ENCODE measurements at regions of chr5 and their contacts with region 1.

Region 1: DNA sequence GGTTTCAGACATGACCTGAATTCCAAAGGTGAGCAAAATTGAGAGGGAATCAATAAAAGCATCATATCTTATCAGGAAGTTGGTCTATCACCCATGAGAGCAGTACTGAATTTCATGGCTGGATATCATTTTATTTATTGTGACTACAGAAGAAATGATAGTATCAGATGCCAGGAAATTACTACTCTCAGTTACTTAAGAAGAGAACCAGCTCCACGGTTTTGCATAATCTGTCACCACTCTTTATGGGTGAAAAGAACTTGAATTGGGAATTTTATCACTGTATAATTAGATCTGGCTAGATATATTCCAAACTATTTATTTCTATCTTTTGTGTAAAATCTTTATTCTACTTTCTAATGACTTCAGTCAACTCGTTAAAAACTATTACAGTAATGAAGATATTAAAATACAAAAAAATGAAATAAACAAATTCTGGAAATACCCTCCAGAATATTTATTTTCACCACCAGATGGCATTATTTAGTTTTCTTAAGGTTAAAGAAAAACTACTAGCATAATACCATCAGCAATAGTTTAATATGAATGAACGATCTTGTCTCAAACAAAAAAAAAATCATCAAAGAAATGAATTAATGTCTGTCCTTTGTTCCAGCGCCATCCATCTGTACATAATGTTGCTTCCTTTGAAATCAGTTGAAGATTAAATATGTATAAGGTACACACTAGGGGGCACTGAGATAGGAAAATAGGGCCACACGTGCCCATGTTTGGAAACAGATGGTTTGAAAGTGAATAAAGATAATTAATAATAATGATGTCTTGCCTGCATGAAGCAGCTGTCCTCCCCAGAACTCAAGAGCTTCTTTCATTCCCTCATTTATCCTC is 84.7 kb upstream of the SLCO6A1 start:
- DNase-seq: peak in 3 of 5 donors; percentile 10 to 16 (median 11)
- H3K4me3 ChIP-seq: no peak overlapping the region
- H3K4me3 Mint-ChIP-seq: no peak overlapping the region
- H3K27ac ChIP-seq: no peak overlapping the region
- H3K27ac Mint-ChIP-seq: no peak overlapping the region
- H3K4me1 ChIP-seq: no peaks in the 10 kb centered on the region
- H3K4me1 Mint-ChIP-seq: peaks cover 0 to 2% (median 0%) of the 10 kb centered on the region in 4 donors
- H3K27me3 ChIP-seq: no peaks in the 10 kb centered on the region
- H3K27me3 Mint-ChIP-seq: peaks cover 0 to 2% of the 10 kb centered on the region in 2 donors

Region 2: DNA sequence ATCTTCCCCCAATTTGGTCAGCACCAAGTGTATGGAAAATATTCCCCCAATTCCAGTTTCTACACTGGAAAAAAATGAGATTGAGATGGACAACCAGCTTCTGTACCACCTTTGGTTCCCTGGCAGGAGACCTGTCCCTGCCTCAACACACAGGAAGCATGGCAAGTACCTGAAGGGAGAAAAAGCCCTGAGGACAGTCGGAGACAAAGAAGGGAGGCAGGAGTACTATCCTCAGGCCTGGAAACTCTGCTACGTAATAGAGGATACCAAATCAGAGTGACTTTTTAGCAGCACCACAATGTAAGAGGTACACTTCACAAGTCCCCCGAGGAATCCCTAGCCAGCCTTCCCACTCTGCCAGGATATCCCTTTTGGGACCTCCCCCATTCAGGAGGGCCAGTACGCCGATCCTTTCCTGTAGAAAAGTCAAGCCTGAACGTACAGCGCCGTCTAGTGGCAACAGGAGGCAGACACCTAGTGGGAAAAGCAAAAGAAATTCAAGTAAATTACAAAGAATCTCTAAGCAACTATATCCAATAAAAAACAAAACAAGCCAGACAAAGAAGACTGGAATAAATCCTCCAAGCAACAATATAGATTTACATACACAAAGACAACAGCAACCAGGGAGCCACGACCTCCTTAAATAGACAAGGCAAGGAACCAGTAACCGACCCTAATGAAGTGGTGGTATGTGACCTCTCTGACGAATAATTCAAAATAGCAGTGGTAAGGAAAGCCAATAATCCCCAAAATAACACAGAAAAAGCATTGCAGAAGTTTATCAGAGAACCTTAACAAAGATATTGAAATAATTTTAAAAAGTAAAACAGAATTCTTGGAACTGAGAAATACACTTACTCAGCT is 21.4 kb before region 1 on chr5:
- CTCF ChIA-PET with region 1: no interaction called
- POLR2A ChIA-PET with region 1: no interaction called
- intact Hi-C with region 1: no loop called
- DNase-seq: no peak
- H3K4me3 ChIP-seq: no peak overlapping the region
- H3K4me3 Mint-ChIP-seq: no peak overlapping the region
- H3K27ac ChIP-seq: no peak overlapping the region
- H3K27ac Mint-ChIP-seq: no peak overlapping the region
- H3K4me1 ChIP-seq: no peaks in the 10 kb centered on the region
- H3K4me1 Mint-ChIP-seq: no peaks in the 10 kb centered on the region
- H3K27me3 ChIP-seq: no peaks in the 10 kb centered on the region
- H3K27me3 Mint-ChIP-seq: peaks cover 0 to 7% of the 10 kb centered on the region in 2 donors

Region 3: GRCh38 chr5:102638912-102639652 is 55.6 kb after region 1 on chr5:
- CTCF ChIA-PET with region 1: no interaction called
- POLR2A ChIA-PET with region 1: no interaction called
- intact Hi-C with region 1: no loop called
- DNase-seq: no peak
- H3K4me3 ChIP-seq: no peak overlapping the region
- H3K4me3 Mint-ChIP-seq: no peak overlapping the region
- H3K27ac ChIP-seq: no peak overlapping the region
- H3K27ac Mint-ChIP-seq: no peak overlapping the region
- H3K4me1 ChIP-seq: no peaks in the 10 kb centered on the region
- H3K4me1 Mint-ChIP-seq: no peaks in the 10 kb centered on the region
- H3K27me3 ChIP-seq: no peaks in the 10 kb centered on the region
- H3K27me3 Mint-ChIP-seq: peaks cover 1 to 16% of the 10 kb centered on the region in 2 donors

Region 4: DNA sequence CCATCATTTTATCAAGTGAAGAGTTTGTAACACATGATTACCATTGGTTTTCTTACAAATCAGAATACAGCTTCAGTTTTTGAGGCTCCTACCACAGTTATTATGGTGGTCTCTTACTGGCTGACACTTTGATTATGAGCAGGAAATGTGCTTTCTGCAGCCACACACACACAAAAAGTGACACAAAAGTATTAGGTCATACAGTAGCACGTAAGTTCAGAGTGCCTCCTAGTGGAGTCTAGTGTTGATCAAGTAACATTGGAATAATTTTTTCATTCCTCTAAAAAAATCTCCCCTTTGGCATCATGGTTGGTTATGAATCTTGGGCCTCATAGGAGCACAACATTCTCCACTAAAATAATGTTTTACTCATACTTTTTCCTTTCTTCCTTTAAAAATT is 209.2 kb after region 1 on chr5:
- CTCF ChIA-PET with region 1: no interaction called
- POLR2A ChIA-PET with region 1: no interaction called
- intact Hi-C with region 1: loop called (anchors 5 kb)
- DNase-seq: peak in 1 of 5 donors; percentile 4
- H3K4me3 ChIP-seq: no peak overlapping the region
- H3K4me3 Mint-ChIP-seq: no peak overlapping the region
- H3K27ac ChIP-seq: no peak overlapping the region
- H3K27ac Mint-ChIP-seq: no peak overlapping the region
- H3K4me1 ChIP-seq: no peaks in the 10 kb centered on the region
- H3K4me1 Mint-ChIP-seq: peaks cover 4 to 13% (median 9%) of the 10 kb centered on the region in 4 donors
- H3K27me3 ChIP-seq: no peaks in the 10 kb centered on the region
- H3K27me3 Mint-ChIP-seq: no peaks in the 10 kb centered on the region

Region 5: GRCh38 chr5:103224118-103224893 is 640.8 kb after region 1 on chr5:
- CTCF ChIA-PET with region 1: interaction called, 4 read pairs
- POLR2A ChIA-PET with region 1: no interaction called
- intact Hi-C with region 1: loop called (anchors 1 kb)
- DNase-seq: peak; percentile 41 to 56 (median 50)
- H3K4me3 ChIP-seq: no peak overlapping the region
- H3K4me3 Mint-ChIP-seq: no peak overlapping the region
- H3K27ac ChIP-seq: no peak overlapping the region
- H3K27ac Mint-ChIP-seq: no peak overlapping the region
- H3K4me1 ChIP-seq: no peaks in the 10 kb centered on the region
- H3K4me1 Mint-ChIP-seq: no peaks in the 10 kb centered on the region
- H3K27me3 ChIP-seq: no peaks in the 10 kb centered on the region
- H3K27me3 Mint-ChIP-seq: peaks cover 18 to 27% of the 10 kb centered on the region in 2 donors

Measured in CD4-positive, alpha-beta memory T cell (primary cell).